Ovary (tissue), 10 donors: ENCODE measurements at regions of chr1 and their contacts with region 1.

Region 1: GRCh38 chr1:223748773-223749733 is 36.7 kb downstream of the CAPN2 start:
- DNase-seq: peak; percentile 60 to 82 (median 74)
- H3K4me3 ChIP-seq: peak overlapping the region; percentile 48
- H3K27ac ChIP-seq: peak overlapping the region; percentile 4 to 63
- H3K4me1 ChIP-seq: peaks cover 5% of the 10 kb centered on the region
- H3K27me3 ChIP-seq: no peaks in the 10 kb centered on the region
- CTCF ChIP-seq: peak; percentile 88 to 92 (median 92)
- EP300 ChIP-seq: no peak
- POLR2A ChIP-seq: no peak

Region 2: DNA sequence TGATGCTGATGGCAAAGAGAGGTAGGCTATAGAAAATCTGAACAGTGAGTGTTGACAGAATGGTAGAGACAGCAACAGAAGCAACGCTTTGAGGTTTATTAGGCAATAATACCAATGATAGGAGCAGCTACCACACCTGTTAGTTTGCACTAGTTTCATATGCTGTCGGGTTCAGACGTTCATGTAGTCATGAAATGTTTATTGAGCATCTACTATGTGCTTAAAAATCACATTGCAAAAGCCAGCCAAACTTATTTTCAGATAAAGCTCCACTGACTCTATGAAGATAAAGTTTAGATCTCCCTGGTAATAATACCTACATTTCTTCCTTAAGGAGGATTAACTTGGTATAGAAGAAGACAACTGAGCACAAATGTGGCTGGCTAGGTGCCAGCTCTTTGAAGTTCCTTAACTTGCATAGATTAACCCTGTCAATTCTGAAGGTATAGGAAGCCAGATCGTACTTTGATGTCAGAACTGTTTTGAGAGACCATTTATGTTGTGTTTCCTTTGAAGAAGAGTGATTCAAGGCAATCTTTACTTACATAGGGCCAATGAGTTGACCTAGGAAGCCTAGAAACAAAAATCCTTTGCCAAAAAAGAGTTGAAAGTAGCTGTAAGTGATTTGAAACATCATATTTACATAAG is 862.7 kb before region 1 on chr1:
- intact Hi-C with region 1: no loop called
- DNase-seq: no peak
- H3K4me3 ChIP-seq: no peak overlapping the region
- H3K27ac ChIP-seq: no peak overlapping the region
- H3K4me1 ChIP-seq: no peaks in the 10 kb centered on the region
- H3K27me3 ChIP-seq: no peaks in the 10 kb centered on the region
- CTCF ChIP-seq: no peak
- EP300 ChIP-seq: no peak
- POLR2A ChIP-seq: no peak

Region 3: GRCh38 chr1:223695941-223696340 is 53.1 kb before region 1 on chr1:
- intact Hi-C with region 1: loop called in 2 of 4 experiments (anchors 2 to 5 kb)
- DNase-seq: no peak
- H3K4me3 ChIP-seq: no peak overlapping the region
- H3K27ac ChIP-seq: no peak overlapping the region
- H3K4me1 ChIP-seq: peaks cover 4% of the 10 kb centered on the region
- H3K27me3 ChIP-seq: no peaks in the 10 kb centered on the region
- CTCF ChIP-seq: no peak
- EP300 ChIP-seq: no peak
- POLR2A ChIP-seq: no peak

Region 4: DNA sequence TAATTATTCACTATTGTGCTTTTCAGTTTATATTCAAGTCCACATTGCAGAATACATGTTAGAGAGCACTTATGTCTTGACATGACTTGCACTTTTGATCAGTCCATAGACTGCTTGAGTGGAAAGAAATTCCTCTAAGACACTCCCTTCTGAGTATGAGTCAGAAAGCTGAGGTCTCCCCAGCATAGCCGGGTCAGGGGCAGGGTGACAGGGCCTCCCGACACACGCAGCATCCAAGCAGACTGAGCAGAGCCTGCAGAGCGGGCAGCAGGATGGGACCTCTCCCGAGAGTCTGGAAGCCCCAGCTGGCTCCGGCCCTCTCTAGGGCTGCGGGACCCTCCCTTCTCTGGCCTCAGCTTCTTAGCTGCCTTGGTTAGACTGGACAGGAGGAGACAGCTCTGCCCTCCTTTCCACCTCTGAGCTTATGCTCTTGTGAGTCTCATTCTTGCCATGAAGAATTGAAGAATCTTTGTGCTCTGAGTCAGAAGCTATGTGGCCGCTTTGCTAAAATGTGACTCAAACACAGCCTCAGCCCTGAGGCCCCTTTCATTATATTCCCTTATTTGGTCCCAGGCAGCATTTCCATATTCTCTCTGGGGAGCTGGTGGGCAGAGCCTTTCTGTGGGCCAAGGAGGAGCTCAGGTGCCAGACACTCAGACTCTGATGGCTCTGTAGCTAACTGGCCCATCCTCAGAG is 48.0 kb before region 1 on chr1:
- intact Hi-C with region 1: loop called in 2 of 4 experiments (anchors 2 to 5 kb)
- DNase-seq: peak; percentile 59 to 75 (median 67)
- H3K4me3 ChIP-seq: no peak overlapping the region
- H3K27ac ChIP-seq: peak overlapping the region; percentile 39 to 56
- H3K4me1 ChIP-seq: peaks cover 12% of the 10 kb centered on the region
- H3K27me3 ChIP-seq: no peaks in the 10 kb centered on the region
- CTCF ChIP-seq: no peak
- EP300 ChIP-seq: no peak
- POLR2A ChIP-seq: no peak

Region 5: DNA sequence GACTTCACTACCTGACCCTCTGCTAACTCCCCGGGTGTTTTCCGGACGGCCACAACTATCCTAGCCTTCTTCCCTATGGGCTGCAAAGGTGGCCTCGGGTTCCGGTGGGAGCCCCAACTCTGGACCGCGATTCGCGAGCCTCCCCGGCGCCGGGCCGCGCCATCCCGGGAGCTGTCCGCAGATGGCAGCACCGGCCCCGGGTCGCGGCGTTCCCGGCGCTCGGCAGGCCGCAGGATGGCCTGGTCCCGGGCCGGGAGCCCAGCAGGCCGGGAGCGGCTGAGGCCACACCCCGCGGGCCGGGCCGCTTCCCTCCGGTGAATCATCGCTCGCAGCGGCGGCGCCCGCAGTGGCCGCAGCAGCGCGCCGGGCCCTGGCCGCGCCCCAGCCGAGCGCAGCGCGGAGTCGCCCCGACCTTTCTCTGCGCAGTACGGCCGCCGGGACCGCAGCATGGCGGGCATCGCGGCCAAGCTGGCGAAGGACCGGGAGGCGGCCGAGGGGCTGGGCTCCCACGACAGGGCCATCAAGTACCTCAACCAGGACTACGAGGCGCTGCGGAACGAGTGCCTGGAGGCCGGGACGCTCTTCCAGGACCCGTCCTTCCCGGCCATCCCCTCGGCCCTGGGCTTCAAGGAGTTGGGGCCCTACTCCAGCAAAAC is 36.7 kb before region 1 on chr1 and contains the start of gene CAPN2:
- intact Hi-C with region 1: loop called (anchors 2 kb)
- DNase-seq: peak; percentile 85 to 91 (median 88)
- H3K4me3 ChIP-seq: peak within 1 kb of the TSS; percentile 92
- H3K27ac ChIP-seq: peak within 1 kb of the TSS; percentile 91 to 93
- H3K4me1 ChIP-seq: peaks cover 22% of the 10 kb centered on the region
- H3K27me3 ChIP-seq: no peaks in the 10 kb centered on the region
- CTCF ChIP-seq: peak; percentile 54 to 93 (median 93)
- EP300 ChIP-seq: no peak
- POLR2A ChIP-seq: peak; percentile 77
- total RNA-seq, gene CAPN2: 96.1 to 267 (median 171) TPM